ENCODE measurements at regions of chr11 and their contacts with region 1.

Region 1: DNA sequence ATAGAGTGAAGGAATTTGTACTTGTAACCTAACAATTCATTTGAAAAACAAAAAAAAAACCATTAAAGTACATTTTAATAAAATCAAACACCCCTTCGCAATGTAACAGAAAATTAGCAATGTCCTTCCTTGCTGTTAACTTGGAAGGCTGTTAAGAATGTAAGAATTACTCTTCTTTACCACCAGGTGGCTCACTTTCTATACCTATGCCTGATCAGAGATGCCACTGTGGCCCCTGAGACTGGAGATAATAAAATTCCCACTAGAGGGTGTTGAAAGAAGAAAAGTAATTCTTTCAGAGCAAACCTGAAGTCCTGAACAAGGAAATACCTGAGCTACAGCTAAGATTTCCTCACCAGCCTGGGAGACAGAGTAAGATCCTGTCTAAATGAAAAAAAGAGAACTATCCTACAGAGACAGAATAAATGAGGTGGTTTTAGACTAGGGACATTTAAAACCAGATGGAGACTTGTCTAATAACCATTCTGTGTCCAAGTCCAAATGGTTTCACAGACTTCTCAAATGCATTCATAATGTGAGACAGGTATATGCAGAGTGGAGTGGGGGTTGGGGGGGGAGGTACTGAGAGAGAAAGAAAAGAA is 1089.3 kb downstream of the FAM181B start:
- DNase-seq: no peak
- ATAC-seq: no peak
- H3K4me3 ChIP-seq: no peak overlapping the region
- H3K27ac ChIP-seq: no peak overlapping the region
- H3K4me1 ChIP-seq: no peaks in the 10 kb centered on the region
- H3K27me3 ChIP-seq: no peaks in the 10 kb centered on the region
- CTCF ChIP-seq: peak in 1 of 5 experiments; percentile 35
- POLR2A ChIP-seq: no peak

Region 2: GRCh38 chr11:82682003-82682751 is 1037.8 kb after region 1 on chr11:
- in situ Hi-C with region 1: loop called in 1 of 4 experiments (anchors 25 kb)
- intact Hi-C with region 1: no loop called
- DNase-seq: no peak
- ATAC-seq: peak; percentile 69 to 85
- H3K4me3 ChIP-seq: no peak overlapping the region
- H3K27ac ChIP-seq: no peak overlapping the region
- H3K4me1 ChIP-seq: no peaks in the 10 kb centered on the region
- H3K27me3 ChIP-seq: no peaks in the 10 kb centered on the region
- CTCF ChIP-seq: peak; percentile 22 to 56 (median 48)
- POLR2A ChIP-seq: no peak